ENCODE measurements at regions of chr4 and their contacts with region 1.

Region 1: DNA sequence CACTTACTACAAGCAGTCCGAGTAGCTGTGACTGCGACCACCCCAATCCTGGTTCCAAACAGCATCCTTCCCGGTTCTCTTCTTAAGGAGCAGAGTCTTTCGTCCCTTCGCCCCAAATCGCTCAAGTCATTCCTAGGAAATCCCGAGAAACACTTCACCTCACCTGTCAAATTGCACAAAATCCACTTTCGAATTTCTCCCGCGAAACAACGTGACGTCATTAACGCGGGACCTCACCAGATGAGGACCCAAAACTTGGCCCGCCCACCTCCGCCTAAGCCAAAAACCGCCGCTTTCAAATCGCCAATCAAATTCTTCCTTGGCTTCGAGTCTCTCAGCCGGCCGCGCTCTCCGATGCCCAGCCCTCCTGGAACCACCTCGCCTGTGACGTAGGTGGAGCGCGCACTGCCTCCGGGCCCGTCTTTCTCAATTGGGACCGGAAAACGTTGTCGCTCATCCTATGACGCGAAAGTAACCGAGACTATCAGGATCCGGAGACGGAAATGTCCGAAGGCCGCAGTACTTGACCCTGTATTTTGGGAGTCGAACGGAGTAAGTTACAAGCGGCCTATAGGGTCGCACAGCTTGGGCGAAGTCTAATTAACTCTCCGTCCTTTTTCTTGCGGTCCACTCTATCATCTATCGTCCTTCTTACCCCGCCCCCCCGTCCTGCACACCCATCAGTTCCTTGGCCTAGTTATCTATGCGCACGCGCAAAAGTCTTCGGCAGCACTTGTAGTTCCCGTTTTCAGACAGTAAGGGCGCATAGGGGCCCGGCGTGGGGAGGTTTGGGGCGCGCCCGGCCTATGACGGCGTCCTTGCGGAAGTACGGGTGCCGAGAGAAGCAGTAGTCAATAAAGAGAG is at the starts of genes LARP7 and ZGRF1:
- DNase-seq: peak; percentile 99
- H3K4me3 Mint-ChIP-seq: no peak within 1 kb of the TSS
- H3K27ac Mint-ChIP-seq: no peak within 1 kb of the TSS
- H3K4me1 Mint-ChIP-seq: peaks cover 34% of the 10 kb centered on the region
- H3K27me3 Mint-ChIP-seq: no peaks in the 10 kb centered on the region

Region 2: GRCh38 chr4:112214390-112215264 is 422.3 kb before region 1 on chr4:
- CTCF ChIA-PET with region 1: no interaction called
- DNase-seq: no peak
- H3K4me3 Mint-ChIP-seq: no peak overlapping the region
- H3K27ac Mint-ChIP-seq: no peak overlapping the region
- H3K4me1 Mint-ChIP-seq: peaks cover 5% of the 10 kb centered on the region
- H3K27me3 Mint-ChIP-seq: peaks cover 6% of the 10 kb centered on the region

Region 3: GRCh38 chr4:112472318-112472717 is 164.6 kb before region 1 on chr4:
- CTCF ChIA-PET with region 1: no interaction called
- DNase-seq: no peak
- H3K4me3 Mint-ChIP-seq: no peak overlapping the region
- H3K27ac Mint-ChIP-seq: no peak overlapping the region
- H3K4me1 Mint-ChIP-seq: no peaks in the 10 kb centered on the region
- H3K27me3 Mint-ChIP-seq: peaks cover 8% of the 10 kb centered on the region

Region 4: DNA sequence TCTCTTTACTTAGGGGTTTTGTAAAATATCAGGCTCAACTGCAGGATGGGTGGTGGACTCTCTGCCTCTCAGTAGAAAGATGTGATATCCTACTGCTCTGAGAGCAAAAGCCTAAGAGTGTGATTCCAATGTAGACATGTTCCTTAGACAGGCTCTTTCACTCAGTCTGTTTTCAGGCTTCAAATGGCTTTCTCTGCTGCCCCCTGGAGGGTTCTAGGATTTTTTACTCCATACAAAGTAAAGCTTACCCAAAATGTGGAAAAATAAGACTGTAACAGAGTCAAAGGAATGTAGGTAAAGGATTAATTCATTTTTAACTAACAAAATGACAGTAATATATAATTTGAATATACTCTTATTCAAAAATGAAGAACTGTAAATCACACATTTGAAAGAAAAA is 32.3 kb before region 1 on chr4:
- CTCF ChIA-PET with region 1: no interaction called
- DNase-seq: peak; percentile 55
- H3K4me3 Mint-ChIP-seq: no peak overlapping the region
- H3K27ac Mint-ChIP-seq: no peak overlapping the region
- H3K4me1 Mint-ChIP-seq: no peaks in the 10 kb centered on the region
- H3K27me3 Mint-ChIP-seq: no peaks in the 10 kb centered on the region

Region 5: DNA sequence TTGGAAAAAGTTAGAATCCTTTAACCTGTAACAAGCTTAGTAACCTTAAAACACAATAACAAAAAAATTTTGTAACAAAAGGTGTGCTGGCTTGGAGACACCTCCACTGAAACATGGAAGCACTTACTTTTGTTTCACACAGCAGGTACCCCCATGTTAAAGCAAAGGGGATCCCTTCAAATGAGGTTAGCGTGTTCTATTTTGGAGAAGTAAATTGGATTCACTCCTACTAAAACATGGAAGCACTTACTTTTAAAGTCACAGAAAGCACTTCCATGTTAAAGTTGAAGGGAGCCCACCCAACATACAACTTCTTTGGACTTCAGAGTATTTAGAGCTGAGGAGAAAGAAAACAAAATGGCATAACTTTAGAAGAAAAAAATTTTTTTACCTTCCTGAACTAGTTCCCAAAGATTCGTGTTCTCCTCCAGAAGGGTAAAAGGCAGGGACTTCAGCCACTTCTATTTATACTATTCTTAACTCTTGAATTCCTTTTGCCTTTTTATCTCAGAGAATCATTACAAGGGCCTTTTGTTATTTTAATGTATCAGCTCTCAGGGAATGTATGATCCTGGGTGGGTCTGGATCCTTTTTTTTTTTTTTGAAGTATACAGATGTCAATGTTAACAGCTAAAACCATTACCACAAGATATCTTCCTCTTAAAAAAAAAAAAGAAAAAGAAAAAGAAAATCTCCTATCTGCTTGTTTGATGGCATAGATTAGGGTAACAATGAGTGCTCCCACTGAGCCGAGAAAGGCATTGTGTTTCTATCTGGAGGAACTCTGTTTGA is 11.5 kb after region 1 on chr4:
- CTCF ChIA-PET with region 1: interaction called, 10 read pairs
- DNase-seq: no peak
- H3K4me3 Mint-ChIP-seq: no peak overlapping the region
- H3K27ac Mint-ChIP-seq: no peak overlapping the region
- H3K4me1 Mint-ChIP-seq: peaks cover 3% of the 10 kb centered on the region
- H3K27me3 Mint-ChIP-seq: no peaks in the 10 kb centered on the region

Region 6: DNA sequence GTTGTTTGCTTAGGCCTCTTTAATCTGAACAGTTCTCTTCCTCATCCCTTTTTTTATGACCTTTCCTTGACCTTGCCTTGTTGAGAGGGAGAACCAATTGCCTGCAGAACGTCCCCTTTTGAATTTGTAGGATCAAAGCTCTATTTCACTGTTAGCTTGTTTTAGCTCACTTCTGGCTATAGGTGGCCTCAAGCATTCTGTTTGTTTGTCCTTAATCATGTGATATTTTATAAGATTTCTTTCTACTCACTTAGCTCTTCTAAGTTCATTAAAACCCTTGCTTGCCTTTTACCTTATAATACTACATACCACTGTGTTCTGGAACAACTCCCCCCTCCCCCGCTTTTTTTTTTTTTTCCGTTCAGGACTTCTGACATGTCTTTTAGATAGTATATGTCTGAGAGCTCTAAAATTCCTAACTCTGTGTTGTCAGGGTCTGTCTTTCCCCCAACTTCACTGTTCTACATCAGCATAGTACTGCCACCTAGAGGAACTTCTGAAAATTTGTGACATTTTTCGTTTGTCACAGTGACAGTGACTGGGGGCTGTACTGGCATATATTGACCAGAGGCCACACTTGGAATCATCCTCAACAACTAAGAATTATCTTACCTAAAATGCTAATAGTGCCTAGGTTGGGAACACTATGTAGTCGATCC is 128.5 kb after region 1 on chr4:
- CTCF ChIA-PET with region 1: interaction called, 27 read pairs
- DNase-seq: no peak
- H3K4me3 Mint-ChIP-seq: no peak overlapping the region
- H3K27ac Mint-ChIP-seq: no peak overlapping the region
- H3K4me1 Mint-ChIP-seq: no peaks in the 10 kb centered on the region
- H3K27me3 Mint-ChIP-seq: no peaks in the 10 kb centered on the region